MCF 10A (cell line): ENCODE measurements at regions of chr2 and their contacts with region 1.

Region 1: DNA sequence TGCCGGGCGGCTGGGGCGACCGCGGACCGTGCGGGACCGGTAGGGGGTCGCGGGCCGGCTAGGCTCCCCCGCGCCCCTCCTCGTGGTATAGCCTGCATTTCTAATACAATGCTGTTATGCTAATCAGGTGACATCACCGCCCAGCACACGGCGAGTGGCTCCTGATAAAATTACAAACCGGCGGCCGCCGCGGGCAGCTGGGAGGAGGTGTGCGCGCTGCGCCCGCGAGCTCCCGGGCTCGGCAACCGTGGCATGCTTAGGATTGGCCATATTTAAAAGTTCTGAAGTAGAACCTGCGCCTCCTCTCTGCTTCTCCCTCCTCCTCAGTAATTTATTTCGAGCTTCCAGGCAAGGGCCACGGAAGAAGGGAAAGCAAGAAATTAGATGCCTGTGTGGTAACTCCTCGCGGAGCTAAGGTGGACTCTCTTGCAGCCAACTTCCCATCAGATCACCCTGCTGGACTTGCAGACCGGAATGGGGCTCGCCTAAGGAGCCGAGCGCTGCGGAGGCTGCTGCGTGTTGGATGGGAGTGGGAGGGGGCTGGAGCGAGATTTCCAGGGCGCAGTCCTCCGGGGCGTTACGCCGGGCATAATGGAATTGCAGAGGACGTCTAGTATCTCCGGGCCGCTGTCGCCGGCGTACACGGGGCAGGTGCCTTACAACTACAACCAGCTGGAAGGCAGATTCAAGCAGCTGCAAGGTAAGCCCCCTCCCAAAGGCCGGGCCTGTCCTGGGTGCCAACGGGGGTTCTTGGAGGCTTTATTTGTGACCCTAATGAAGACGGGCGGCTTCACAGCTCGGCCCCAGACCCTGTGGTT is 102.3 kb downstream of the SPTBN1 start:
- DNase-seq: peak; percentile 85
- H3K4me3 Mint-ChIP-seq: peak overlapping the region; percentile 87
- H3K27ac Mint-ChIP-seq: peak overlapping the region; percentile 96
- H3K4me1 Mint-ChIP-seq: peaks cover 42% of the 10 kb centered on the region
- H3K27me3 Mint-ChIP-seq: no peaks in the 10 kb centered on the region
- CTCF ChIP-seq: no peak

Region 2: DNA sequence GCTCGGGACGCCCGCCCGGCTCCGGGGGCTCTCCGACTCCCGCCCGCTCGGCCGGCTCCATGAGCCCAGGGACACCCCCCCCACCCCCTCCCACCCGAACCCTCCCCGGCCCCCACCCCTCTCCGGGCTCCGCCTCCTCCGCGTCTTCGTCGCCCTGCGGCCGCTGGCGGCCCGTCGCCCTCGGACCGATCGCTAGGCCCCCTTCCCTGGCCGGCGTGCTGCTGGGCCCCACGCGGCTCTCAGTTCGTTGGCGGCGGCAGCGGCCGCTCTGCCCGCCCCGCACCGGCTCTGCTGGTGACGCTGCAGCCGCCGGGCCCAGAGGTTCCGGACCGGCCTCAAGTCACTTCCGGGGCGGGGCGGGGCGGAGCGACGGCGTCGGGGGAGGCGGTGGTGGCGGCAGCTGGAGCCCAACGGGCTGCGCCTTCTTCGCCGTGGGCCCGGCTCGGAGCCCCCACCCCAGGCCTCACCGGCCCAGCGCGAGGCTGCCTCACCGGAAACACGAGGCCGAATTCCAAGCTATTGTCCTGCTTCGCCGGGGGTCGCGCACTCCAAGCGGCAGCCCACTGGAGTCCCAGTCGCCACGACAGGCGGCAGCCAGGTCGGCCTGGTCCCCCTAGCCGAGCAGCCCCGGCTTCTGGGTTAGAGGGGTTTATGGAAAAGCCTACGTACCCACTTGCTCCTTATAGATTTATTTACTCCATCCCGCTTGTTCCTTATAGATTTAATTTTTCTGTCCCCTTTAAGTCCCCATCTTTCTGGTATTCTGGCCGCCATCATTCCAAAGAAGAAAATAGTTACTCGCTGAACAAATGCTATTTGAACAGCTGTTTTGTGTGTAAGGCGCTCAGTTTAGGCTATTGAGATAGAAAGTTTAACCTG is 587.4 kb before region 1 on chr2 and contains the start of gene PSME4:
- CTCF ChIA-PET with region 1: no interaction called
- POLR2A ChIA-PET with region 1: interaction called, 38 read pairs
- intact Hi-C with region 1: no loop called
- DNase-seq: peak; percentile 88
- H3K4me3 Mint-ChIP-seq: peak within 1 kb of the TSS; percentile 87
- H3K27ac Mint-ChIP-seq: peak within 1 kb of the TSS; percentile 94
- H3K4me1 Mint-ChIP-seq: peaks cover 33% of the 10 kb centered on the region
- H3K27me3 Mint-ChIP-seq: no peaks in the 10 kb centered on the region
- CTCF ChIP-seq: no peak
- total RNA-seq, gene PSME4: 54.8 and 65.2 TPM in 2 replicates

Region 3: GRCh38 chr2:54531558-54531957 is 26.8 kb before region 1 on chr2:
- CTCF ChIA-PET with region 1: interaction called, 4 read pairs
- POLR2A ChIA-PET with region 1: interaction called, 249 read pairs
- intact Hi-C with region 1: loop called (anchors 1 kb)
- DNase-seq: peak; percentile 81
- H3K4me3 Mint-ChIP-seq: no peak overlapping the region
- H3K27ac Mint-ChIP-seq: peak overlapping the region; percentile 88
- H3K4me1 Mint-ChIP-seq: peaks cover 27% of the 10 kb centered on the region
- H3K27me3 Mint-ChIP-seq: no peaks in the 10 kb centered on the region
- CTCF ChIP-seq: no peak

Region 4: GRCh38 chr2:54577035-54577434 is 18.6 kb after region 1 on chr2:
- CTCF ChIA-PET with region 1: interaction called, 11 read pairs
- POLR2A ChIA-PET with region 1: interaction called, 427 read pairs
- intact Hi-C with region 1: no loop called
- DNase-seq: peak; percentile 66
- H3K4me3 Mint-ChIP-seq: peak overlapping the region; percentile 57
- H3K27ac Mint-ChIP-seq: peak overlapping the region; percentile 93
- H3K4me1 Mint-ChIP-seq: peaks cover 68% of the 10 kb centered on the region
- H3K27me3 Mint-ChIP-seq: no peaks in the 10 kb centered on the region
- CTCF ChIP-seq: no peak

Region 5: GRCh38 chr2:54604871-54605270 is 46.5 kb after region 1 on chr2:
- CTCF ChIA-PET with region 1: interaction called, 6 read pairs
- POLR2A ChIA-PET with region 1: interaction called, 80 read pairs
- intact Hi-C with region 1: loop called (anchors 1 kb)
- DNase-seq: no peak
- H3K4me3 Mint-ChIP-seq: no peak overlapping the region
- H3K27ac Mint-ChIP-seq: peak overlapping the region; percentile 17
- H3K4me1 Mint-ChIP-seq: peaks cover 37% of the 10 kb centered on the region
- H3K27me3 Mint-ChIP-seq: no peaks in the 10 kb centered on the region
- CTCF ChIP-seq: no peak

Region 6: DNA sequence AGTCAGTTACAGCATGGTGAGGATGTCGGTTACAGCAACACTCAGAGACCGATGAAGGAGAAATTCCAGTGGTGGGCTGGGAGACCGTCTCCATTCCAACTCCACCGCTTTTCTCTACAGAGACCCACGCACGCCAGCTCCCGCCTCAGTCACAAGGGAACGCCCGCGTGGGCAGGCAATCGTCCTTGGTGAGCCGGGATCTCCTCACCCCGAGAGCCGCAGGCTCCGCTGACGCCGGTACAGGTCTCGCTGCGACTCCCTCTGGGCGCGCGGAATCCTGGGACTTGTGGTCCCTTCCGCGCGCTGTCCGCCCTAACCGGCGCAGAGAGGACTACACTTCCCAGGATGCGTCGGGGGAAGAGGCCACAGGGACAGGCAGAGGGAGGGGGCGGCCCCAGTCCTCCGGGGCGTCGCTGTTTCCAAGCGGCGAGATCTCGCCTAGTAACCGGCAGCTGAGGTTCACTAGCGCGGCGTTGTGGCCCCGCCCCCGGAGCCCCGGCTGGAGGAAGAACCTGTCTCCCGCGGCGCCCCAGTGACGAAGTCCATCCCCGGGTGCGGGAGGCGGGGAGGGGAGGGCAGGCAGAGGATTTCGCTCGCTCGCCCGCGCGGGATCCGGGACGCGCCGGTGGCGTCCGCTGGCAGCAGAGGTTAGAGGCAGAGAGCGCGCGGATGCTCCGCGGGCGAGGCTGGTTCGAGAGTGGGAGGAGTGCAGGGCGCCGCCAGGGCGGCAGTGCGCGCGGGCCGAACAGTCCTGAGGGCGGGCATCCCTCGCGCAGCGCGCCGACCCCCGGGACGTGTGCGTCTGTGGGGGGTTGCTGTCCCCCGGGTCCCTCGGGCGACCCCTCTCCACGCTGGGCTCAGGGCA is 165.0 kb after region 1 on chr2 and contains the start of gene EML6:
- CTCF ChIA-PET with region 1: interaction called, 3 read pairs
- POLR2A ChIA-PET with region 1: interaction called, 11 read pairs
- intact Hi-C with region 1: no loop called
- DNase-seq: peak; percentile 99
- H3K4me3 Mint-ChIP-seq: peak within 1 kb of the TSS; percentile 87
- H3K27ac Mint-ChIP-seq: peak within 1 kb of the TSS; percentile 77
- H3K4me1 Mint-ChIP-seq: peaks cover 23% of the 10 kb centered on the region
- H3K27me3 Mint-ChIP-seq: no peaks in the 10 kb centered on the region
- CTCF ChIP-seq: no peak
- total RNA-seq, gene EML6: 0.77 and 1.7 TPM in 2 replicates